ENCODE measurements at regions of chr4 and their contacts with region 1.

Region 1: GRCh38 chr4:112636688-112637551 is at the starts of genes LARP7 and ZGRF1:
- DNase-seq: peak; percentile 91 to 99 (median 99)
- ATAC-seq: peak; percentile 91
- H3K4me3 ChIP-seq: peak within 1 kb of the TSS; percentile 98
- H3K4me3 Mint-ChIP-seq: peak within 1 kb of the TSS in 2 of 10 donors; percentile 26 to 46
- H3K27ac ChIP-seq: peak within 1 kb of the TSS; percentile 88
- H3K27ac Mint-ChIP-seq: peak within 1 kb of the TSS in 1 of 9 donors; percentile 66
- H3K4me1 ChIP-seq: peaks cover 9 to 17% of the 10 kb centered on the region in 2 donors
- H3K4me1 Mint-ChIP-seq: peaks cover 19 to 29% (median 21%) of the 10 kb centered on the region in 7 donors
- H3K27me3 ChIP-seq: no peaks in the 10 kb centered on the region
- H3K27me3 Mint-ChIP-seq: no peaks in the 10 kb centered on the region
- total RNA-seq, gene LARP7: 28.6 to 48.2 (median 47.7) TPM
- total RNA-seq, gene ZGRF1: 8.1 to 29.8 (median 10.5) TPM

Region 2: DNA sequence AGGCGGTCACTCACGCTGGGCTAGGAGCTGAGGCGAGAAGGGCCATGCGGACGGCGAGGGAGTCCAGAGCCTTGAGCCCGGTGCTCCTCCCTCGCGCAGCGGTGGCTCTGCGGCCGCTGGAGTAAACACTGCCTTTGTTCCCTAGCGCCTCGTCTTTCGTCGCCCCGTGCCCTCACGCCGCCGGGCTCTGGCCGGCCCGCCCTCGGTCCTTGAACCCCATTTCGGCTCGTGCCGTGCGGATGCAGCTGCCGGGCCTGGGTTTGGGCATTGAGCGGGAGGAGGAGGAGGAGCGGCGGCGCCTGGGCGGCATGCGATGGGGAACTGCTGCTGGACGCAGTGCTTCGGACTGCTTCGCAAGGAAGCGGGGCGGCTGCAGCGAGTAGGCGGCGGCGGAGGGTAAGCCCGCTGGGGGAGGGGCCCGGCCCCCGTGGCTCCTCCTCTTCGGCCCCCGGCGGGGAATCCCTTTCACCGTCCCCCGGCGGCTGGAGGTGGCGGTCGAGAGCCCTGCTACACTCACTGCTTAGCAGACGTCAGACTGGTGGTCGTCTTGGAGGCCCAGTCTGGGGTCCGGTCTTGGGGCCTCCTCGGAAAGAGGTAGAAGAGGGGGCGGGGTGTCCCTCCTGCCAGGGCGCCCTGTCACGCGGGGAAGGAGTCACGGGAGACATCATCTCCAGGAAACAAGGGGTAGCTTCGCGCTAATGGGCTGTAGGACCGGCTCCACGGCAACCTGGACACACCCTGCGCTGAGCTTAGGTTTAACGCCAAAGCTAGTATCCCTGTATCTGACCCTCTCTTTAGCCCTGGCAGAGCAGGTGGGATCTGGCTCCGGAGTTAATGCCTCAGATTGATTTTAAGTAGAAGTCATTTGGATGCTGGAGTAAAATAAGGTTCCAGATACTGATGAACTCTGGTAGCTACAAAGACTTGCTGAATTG is 404.9 kb before region 1 on chr4 and contains the start of gene AP1AR:
- CTCF ChIA-PET with region 1: no interaction called
- POLR2A ChIA-PET with region 1: no interaction called
- intact Hi-C with region 1: loop called (anchors 1 kb)
- DNase-seq: peak; percentile 61 to 87 (median 71)
- ATAC-seq: peak; percentile 73
- H3K4me3 ChIP-seq: peak within 1 kb of the TSS; percentile 71
- H3K4me3 Mint-ChIP-seq: peak within 1 kb of the TSS; percentile 86 to 99 (median 96)
- H3K27ac ChIP-seq: peak within 1 kb of the TSS; percentile 85
- H3K27ac Mint-ChIP-seq: peak within 1 kb of the TSS; percentile 91 to 100 (median 99)
- H3K4me1 ChIP-seq: peaks cover 3 to 12% of the 10 kb centered on the region in 2 donors
- H3K4me1 Mint-ChIP-seq: peaks cover 19 to 50% (median 33%) of the 10 kb centered on the region in 7 donors
- H3K27me3 ChIP-seq: no peaks in the 10 kb centered on the region
- H3K27me3 Mint-ChIP-seq: peaks cover under 1 to 4% (median 1%) of the 10 kb centered on the region in 5 donors
- total RNA-seq, gene AP1AR: 7.3 to 21.0 (median 17.0) TPM

Region 3: GRCh38 chr4:112327965-112328733 is 308.8 kb before region 1 on chr4:
- CTCF ChIA-PET with region 1: no interaction called
- POLR2A ChIA-PET with region 1: no interaction called
- intact Hi-C with region 1: loop called in 1 of 2 experiments (anchors 10 kb)
- DNase-seq: peak in 4 of 9 donors; percentile 21 to 27 (median 24)
- ATAC-seq: peak; percentile 60
- H3K4me3 ChIP-seq: no peak overlapping the region
- H3K4me3 Mint-ChIP-seq: no peak overlapping the region
- H3K27ac ChIP-seq: no peak overlapping the region
- H3K27ac Mint-ChIP-seq: no peak overlapping the region
- H3K4me1 ChIP-seq: no peaks in the 10 kb centered on the region
- H3K4me1 Mint-ChIP-seq: peaks cover 0 to 9% (median under 1%) of the 10 kb centered on the region in 7 donors
- H3K27me3 ChIP-seq: no peaks in the 10 kb centered on the region
- H3K27me3 Mint-ChIP-seq: no peaks in the 10 kb centered on the region

Region 4: GRCh38 chr4:112411781-112412550 is 225.0 kb before region 1 on chr4:
- CTCF ChIA-PET with region 1: no interaction called
- POLR2A ChIA-PET with region 1: no interaction called
- intact Hi-C with region 1: no loop called
- DNase-seq: no peak
- ATAC-seq: no peak
- H3K4me3 ChIP-seq: no peak overlapping the region
- H3K4me3 Mint-ChIP-seq: no peak overlapping the region
- H3K27ac ChIP-seq: no peak overlapping the region
- H3K27ac Mint-ChIP-seq: no peak overlapping the region
- H3K4me1 ChIP-seq: no peaks in the 10 kb centered on the region
- H3K4me1 Mint-ChIP-seq: peaks cover 0 to 5% (median 0%) of the 10 kb centered on the region in 7 donors
- H3K27me3 ChIP-seq: no peaks in the 10 kb centered on the region
- H3K27me3 Mint-ChIP-seq: no peaks in the 10 kb centered on the region

Region 5: GRCh38 chr4:112704991-112705845 is 68.3 kb after region 1 on chr4:
- CTCF ChIA-PET with region 1: no interaction called
- POLR2A ChIA-PET with region 1: no interaction called
- intact Hi-C with region 1: loop called (anchors 1 kb)
- DNase-seq: peak in 2 of 9 donors; percentile 2
- ATAC-seq: no peak
- H3K4me3 ChIP-seq: peak overlapping the region; percentile 31
- H3K4me3 Mint-ChIP-seq: peak overlapping the region; percentile 71 to 90 (median 84)
- H3K27ac ChIP-seq: no peak overlapping the region
- H3K27ac Mint-ChIP-seq: peak overlapping the region in 1 of 9 donors; percentile 46
- H3K4me1 ChIP-seq: peaks cover 5% of the 10 kb centered on the region in 2 donors
- H3K4me1 Mint-ChIP-seq: peaks cover 14 to 21% (median 18%) of the 10 kb centered on the region in 7 donors
- H3K27me3 ChIP-seq: peaks cover 0 to 17% of the 10 kb centered on the region in 2 donors
- H3K27me3 Mint-ChIP-seq: peaks cover 58 to 68% (median 60%) of the 10 kb centered on the region in 5 donors

Region 6: DNA sequence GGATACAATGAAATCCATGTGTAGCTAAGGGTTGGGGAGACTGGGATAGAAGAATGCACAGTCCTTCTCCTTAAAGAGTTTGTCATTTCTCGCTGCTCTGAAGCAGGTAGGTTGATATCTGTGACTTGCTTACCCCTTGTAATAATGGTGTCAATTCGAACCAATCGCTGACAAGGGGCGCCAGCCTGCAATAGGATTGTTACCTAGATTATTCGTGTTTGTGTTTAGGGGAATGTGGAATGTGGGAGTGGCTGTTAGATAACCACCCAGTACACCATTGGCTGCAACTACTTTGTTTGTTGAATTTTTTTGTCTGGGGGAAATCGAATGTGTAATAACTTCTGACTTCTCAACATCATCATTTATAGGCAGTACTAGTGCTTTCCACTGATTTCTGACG is 141.6 kb after region 1 on chr4:
- CTCF ChIA-PET with region 1: no interaction called
- POLR2A ChIA-PET with region 1: no interaction called
- intact Hi-C with region 1: no loop called
- DNase-seq: no peak
- ATAC-seq: no peak
- H3K4me3 ChIP-seq: no peak overlapping the region
- H3K4me3 Mint-ChIP-seq: no peak overlapping the region
- H3K27ac ChIP-seq: no peak overlapping the region
- H3K27ac Mint-ChIP-seq: no peak overlapping the region
- H3K4me1 ChIP-seq: no peaks in the 10 kb centered on the region
- H3K4me1 Mint-ChIP-seq: no peaks in the 10 kb centered on the region
- H3K27me3 ChIP-seq: no peaks in the 10 kb centered on the region
- H3K27me3 Mint-ChIP-seq: peaks cover 0 to 7% (median 0%) of the 10 kb centered on the region in 5 donors

Region 7: DNA sequence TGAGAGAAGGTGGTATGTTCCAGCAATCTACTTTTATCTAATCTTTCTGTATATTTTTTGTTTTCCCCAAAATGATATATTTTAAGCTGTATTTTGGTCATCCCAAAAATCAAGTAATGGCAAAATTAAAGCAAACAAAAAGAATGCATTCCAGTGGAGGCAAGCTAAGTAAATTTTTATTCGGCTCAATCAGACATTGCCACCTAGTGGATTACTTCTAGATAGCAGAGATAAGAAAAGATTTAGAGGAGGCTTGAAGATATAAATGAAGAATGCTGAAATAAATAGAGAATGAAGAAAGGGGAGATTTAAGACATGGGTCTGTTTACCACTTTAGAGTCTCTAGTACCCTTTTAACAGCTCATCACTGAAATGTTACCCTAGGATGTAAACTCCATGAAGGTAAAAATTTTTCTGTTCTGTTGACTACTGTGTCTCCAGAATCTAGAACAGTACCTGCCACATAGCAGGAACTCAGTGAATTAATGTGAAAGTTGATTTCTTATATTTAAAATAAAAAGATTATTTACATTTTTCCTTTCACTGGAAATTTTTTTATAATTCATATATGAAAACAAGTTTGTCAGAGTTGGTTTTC is 301.6 kb after region 1 on chr4:
- CTCF ChIA-PET with region 1: no interaction called
- POLR2A ChIA-PET with region 1: no interaction called
- intact Hi-C with region 1: loop called (anchors 1 kb)
- DNase-seq: peak in 3 of 9 donors; percentile 3 to 14 (median 4)
- ATAC-seq: no peak
- H3K4me3 ChIP-seq: no peak overlapping the region
- H3K4me3 Mint-ChIP-seq: no peak overlapping the region
- H3K27ac ChIP-seq: no peak overlapping the region
- H3K27ac Mint-ChIP-seq: no peak overlapping the region
- H3K4me1 ChIP-seq: no peaks in the 10 kb centered on the region
- H3K4me1 Mint-ChIP-seq: no peaks in the 10 kb centered on the region
- H3K27me3 ChIP-seq: no peaks in the 10 kb centered on the region
- H3K27me3 Mint-ChIP-seq: peaks cover 9 to 26% (median 23%) of the 10 kb centered on the region in 5 donors

Measured in naive thymus-derived CD4-positive, alpha-beta T cell (primary cell).